PC-9 (cell line): ENCODE measurements at regions of chr6 and their contacts with region 1.

Region 1: GRCh38 chr6:46042355-46042999 is 26.8 kb upstream of the CLIC5 start:
- DNase-seq: peak in 1 of 2 experiments; percentile 18
- H3K4me3 ChIP-seq: no peak overlapping the region
- H3K27ac ChIP-seq: no peak overlapping the region
- H3K4me1 ChIP-seq: peaks cover 5% of the 10 kb centered on the region; the same call in 1 of the 2 replicates
- H3K27me3 ChIP-seq: no peaks in the 10 kb centered on the region
- CTCF ChIP-seq: peak; percentile 68

Region 2: GRCh38 chr6:46410334-46410953 is 368.0 kb after region 1 on chr6:
- CTCF ChIA-PET with region 1: no interaction called
- POLR2A ChIA-PET with region 1: no interaction called
- intact Hi-C with region 1: loop called (anchors 1 kb)
- DNase-seq: peak in 1 of 2 experiments; percentile 23
- H3K4me3 ChIP-seq: no peak overlapping the region
- H3K27ac ChIP-seq: no peak overlapping the region
- H3K4me1 ChIP-seq: no peaks in the 10 kb centered on the region
- H3K27me3 ChIP-seq: no peaks in the 10 kb centered on the region
- CTCF ChIP-seq: peak; percentile 91